MCF 10A (cell line): ENCODE measurements at regions of chr11 and their contacts with region 1.

Region 1: DNA sequence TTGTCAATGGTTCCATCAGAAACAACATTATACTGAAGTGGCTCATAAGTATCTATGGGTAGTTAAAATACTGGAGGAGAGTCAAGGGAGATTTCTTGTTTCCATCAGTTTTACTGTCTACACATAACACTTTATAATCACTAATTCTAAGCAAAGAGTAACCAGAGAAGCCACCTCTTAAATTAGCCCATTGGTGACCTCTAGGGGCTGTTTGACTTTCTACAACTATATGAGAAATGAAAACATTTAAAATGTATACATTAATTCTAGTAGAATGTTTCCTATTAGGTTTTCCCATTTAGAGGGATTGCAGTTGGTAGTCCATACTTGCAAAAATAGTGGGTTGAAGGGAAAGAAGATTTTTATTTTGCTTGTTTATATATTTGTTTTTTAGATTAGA is 504.3 kb downstream of the FAM181B start:
- DNase-seq: peak; percentile 47
- H3K4me3 Mint-ChIP-seq: no peak overlapping the region
- H3K27ac Mint-ChIP-seq: no peak overlapping the region
- H3K4me1 Mint-ChIP-seq: no peaks in the 10 kb centered on the region
- H3K27me3 Mint-ChIP-seq: peaks cover 52% of the 10 kb centered on the region
- CTCF ChIP-seq: peak; percentile 41

Region 2: GRCh38 chr11:81658722-81659121 is 570.6 kb before region 1 on chr11:
- CTCF ChIA-PET with region 1: interaction called, 4 read pairs
- POLR2A ChIA-PET with region 1: no interaction called
- intact Hi-C with region 1: loop called (anchors 1 kb)
- DNase-seq: peak; percentile 27
- H3K4me3 Mint-ChIP-seq: no peak overlapping the region
- H3K27ac Mint-ChIP-seq: no peak overlapping the region
- H3K4me1 Mint-ChIP-seq: no peaks in the 10 kb centered on the region
- H3K27me3 Mint-ChIP-seq: peaks cover 83% of the 10 kb centered on the region
- CTCF ChIP-seq: peak; percentile 67

Region 3: GRCh38 chr11:81787584-81788049 is 441.7 kb before region 1 on chr11:
- CTCF ChIA-PET with region 1: no interaction called
- POLR2A ChIA-PET with region 1: no interaction called
- intact Hi-C with region 1: loop called (anchors 5 kb)
- DNase-seq: peak; percentile 4
- H3K4me3 Mint-ChIP-seq: no peak overlapping the region
- H3K27ac Mint-ChIP-seq: no peak overlapping the region
- H3K4me1 Mint-ChIP-seq: no peaks in the 10 kb centered on the region
- H3K27me3 Mint-ChIP-seq: peaks cover 56% of the 10 kb centered on the region
- CTCF ChIP-seq: no peak